HepG2 (cell line): ENCODE measurements at regions of chr11 and their contacts with region 1.

Region 1: GRCh38 chr11:27718346-27718852 is 18.1 kb upstream of the BDNF start:
- DNase-seq: no peak
- ATAC-seq: peak; percentile 68
- H3K4me3 ChIP-seq: peak overlapping the region in 1 of 3 experiments; percentile 32; a peak in 1 of 6 replicates
- H3K27ac ChIP-seq: no peak overlapping the region
- H3K4me1 ChIP-seq: no peaks in the 10 kb centered on the region
- H3K27me3 ChIP-seq: peaks cover 1 to 31% of the 10 kb centered on the region in 2 experiments; a peak in 2 of 5 replicates
- CTCF ChIP-seq: no peak
- EP300 ChIP-seq: no peak
- POLR2A ChIP-seq: no peak
- RAD21 ChIP-seq: no peak

Region 2: GRCh38 chr11:28107748-28108618 is 389.6 kb after region 1 on chr11 and contains the starts of genes KIF18A and METTL15:
- CTCF ChIA-PET with region 1: no interaction called
- POLR2A ChIA-PET with region 1: no interaction called
- in situ Hi-C with region 1: no loop called
- intact Hi-C with region 1: loop called (anchors 5 kb)
- DNase-seq: peak; percentile 96
- ATAC-seq: peak; percentile 95
- H3K4me3 ChIP-seq: peak within 1 kb of the TSS; percentile 84 to 99 (median 84)
- H3K27ac ChIP-seq: peak within 1 kb of the TSS; percentile 96
- H3K4me1 ChIP-seq: peaks cover 60% of the 10 kb centered on the region
- H3K27me3 ChIP-seq: no peaks in the 10 kb centered on the region; a peak in 1 of 5 replicates
- CTCF ChIP-seq: no peak
- EP300 ChIP-seq: peak in 1 of 2 experiments; percentile 21; a peak in 1 of 4 replicates
- POLR2A ChIP-seq: peak; percentile 76 to 88
- RAD21 ChIP-seq: no peak
- total RNA-seq, gene KIF18A: 14.4 and 22.8 TPM in 2 replicates
- total RNA-seq, gene METTL15: 14.0 and 14.4 TPM in 2 replicates